ENCODE measurements at regions of chr22 and their contacts with region 1.

Region 1: DNA sequence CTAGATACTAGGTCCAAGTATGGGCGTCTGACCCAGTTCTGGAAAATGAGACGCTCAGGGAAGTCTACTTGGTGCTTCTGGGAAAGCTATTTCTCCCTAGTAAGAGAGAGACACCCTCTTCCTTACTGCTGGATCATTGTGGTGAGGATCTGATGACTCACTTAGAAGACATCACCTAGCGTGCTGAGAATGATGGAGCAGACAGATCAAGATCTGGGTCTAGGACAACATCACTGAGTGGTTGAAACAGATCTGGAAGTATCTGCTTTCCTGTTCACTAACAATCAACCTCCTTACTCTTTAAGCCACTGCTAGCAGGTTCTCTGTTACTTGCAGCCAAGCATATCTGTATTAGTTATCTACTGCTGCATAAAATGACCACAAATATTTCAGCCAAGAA is 38.3 kb upstream of the HMGXB4 start:
- DNase-seq: peak; percentile 52
- H3K4me3 ChIP-seq: no peak overlapping the region
- CTCF ChIP-seq: no peak

Region 2: DNA sequence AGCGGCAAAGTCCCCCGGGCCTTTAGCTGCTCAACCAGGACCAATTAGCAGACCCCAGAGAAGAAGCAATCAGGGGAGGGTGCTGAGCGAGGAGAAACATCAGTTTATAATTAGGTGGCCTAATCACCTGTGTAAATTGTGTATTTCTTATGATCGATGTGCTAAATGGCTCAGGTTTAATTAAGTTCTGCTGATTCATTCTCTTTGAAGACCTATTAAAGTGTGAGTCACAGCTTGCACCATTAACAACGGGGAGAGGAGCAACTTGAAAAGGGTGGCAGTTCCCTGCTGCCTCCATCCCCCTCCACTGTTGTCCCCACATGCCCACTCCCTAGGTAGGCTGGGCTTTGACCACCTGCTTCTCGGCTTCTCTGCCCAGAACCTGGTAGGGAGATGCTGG is 142.4 kb before region 1 on chr22:
- CTCF ChIA-PET with region 1: no interaction called
- POLR2A ChIA-PET with region 1: no interaction called
- DNase-seq: no peak
- H3K4me3 ChIP-seq: no peak overlapping the region
- CTCF ChIP-seq: no peak

Region 3: GRCh38 chr22:35231585-35232084 is 12.6 kb after region 1 on chr22:
- CTCF ChIA-PET with region 1: interaction called, 70 read pairs
- POLR2A ChIA-PET with region 1: no interaction called
- DNase-seq: no peak
- H3K4me3 ChIP-seq: no peak overlapping the region
- CTCF ChIP-seq: peak; percentile 87

Region 4: GRCh38 chr22:35344956-35345690 is 126.1 kb after region 1 on chr22:
- CTCF ChIA-PET with region 1: no interaction called
- POLR2A ChIA-PET with region 1: no interaction called
- DNase-seq: no peak
- H3K4me3 ChIP-seq: no peak overlapping the region
- CTCF ChIP-seq: no peak